ENCODE measurements at regions of chr10 and their contacts with region 1.

Region 1: GRCh38 chr10:77165445-77166208 is 472.0 kb downstream of the KCNMA1 start:
- DNase-seq: peak; percentile 100
- ATAC-seq: peak; percentile 16
- H3K4me3 ChIP-seq: peak overlapping the region; percentile 43
- H3K27ac ChIP-seq: no peak overlapping the region; the same call in 1 of the 2 replicates
- H3K4me1 ChIP-seq: peaks cover 32% of the 10 kb centered on the region
- H3K27me3 ChIP-seq: no peaks in the 10 kb centered on the region
- CTCF ChIP-seq: no peak

Region 2: DNA sequence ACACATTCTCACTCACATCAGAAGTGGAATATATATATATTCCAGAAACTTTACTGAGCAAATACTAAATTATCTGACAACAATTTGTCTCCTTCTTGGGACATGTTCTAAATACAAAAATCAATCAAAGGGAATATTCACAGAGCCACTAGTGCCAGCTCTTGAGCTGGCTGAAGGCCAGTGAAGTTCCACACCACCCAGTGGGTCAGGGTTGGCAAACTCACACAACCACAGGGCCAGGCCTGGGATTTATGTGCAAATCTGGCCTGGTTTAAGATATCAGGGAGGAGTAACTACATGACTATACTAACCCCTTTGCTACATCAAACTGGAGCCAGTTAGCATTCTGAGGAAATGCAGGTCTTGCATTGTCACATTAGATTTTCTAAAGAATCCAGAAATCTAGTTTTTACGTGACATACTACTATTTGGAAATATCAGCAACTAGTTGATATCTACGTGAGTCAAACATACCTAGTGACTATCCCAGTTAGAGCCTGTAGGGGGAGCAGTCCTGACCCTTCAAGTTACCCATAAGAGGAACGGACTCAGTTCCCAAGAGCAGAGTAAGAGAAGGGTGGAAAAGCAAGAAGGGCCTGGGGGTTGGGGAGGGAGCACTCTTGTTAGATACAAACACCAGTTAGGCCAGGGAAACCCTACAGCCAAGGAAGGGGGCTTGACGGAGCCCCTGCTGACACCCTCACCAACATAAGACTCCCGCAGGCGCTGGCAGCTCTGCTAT is 128.5 kb before region 1 on chr10:
- CTCF ChIA-PET with region 1: no interaction called
- POLR2A ChIA-PET with region 1: no interaction called
- intact Hi-C with region 1: loop called (anchors 1 kb)
- DNase-seq: peak; percentile 74
- ATAC-seq: 0 out of 2 replicates have a peak, but pooled peaks have one; percentile 8
- H3K4me3 ChIP-seq: no peak overlapping the region
- H3K27ac ChIP-seq: no peak overlapping the region
- H3K4me1 ChIP-seq: peaks cover 7% of the 10 kb centered on the region
- H3K27me3 ChIP-seq: no peaks in the 10 kb centered on the region
- CTCF ChIP-seq: peak; percentile 100

Region 3: DNA sequence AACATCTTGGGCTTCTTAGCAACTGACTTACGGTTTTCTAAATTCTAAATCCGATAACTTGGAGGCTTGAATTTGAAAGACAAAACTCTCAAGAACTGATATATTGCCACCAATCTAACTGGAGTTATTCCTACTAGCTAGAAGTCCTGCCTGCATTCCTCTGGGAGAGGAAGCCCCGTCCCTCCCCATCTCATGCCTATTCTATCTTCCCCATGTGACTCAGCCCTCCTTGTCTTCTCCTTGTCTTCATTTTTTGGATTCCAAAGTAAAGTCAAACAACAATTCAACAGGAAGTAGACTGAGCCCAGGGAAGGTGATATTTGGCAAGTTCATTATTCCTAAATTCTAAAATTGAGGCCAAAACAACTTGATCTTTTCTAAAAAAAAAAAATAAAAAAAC is 115.7 kb before region 1 on chr10:
- CTCF ChIA-PET with region 1: no interaction called
- POLR2A ChIA-PET with region 1: no interaction called
- intact Hi-C with region 1: no loop called
- DNase-seq: peak; percentile 50
- ATAC-seq: no peak; the same call in 1 of the 2 replicates
- H3K4me3 ChIP-seq: no peak overlapping the region
- H3K27ac ChIP-seq: no peak overlapping the region
- H3K4me1 ChIP-seq: no peaks in the 10 kb centered on the region
- H3K27me3 ChIP-seq: no peaks in the 10 kb centered on the region
- CTCF ChIP-seq: no peak

Region 4: DNA sequence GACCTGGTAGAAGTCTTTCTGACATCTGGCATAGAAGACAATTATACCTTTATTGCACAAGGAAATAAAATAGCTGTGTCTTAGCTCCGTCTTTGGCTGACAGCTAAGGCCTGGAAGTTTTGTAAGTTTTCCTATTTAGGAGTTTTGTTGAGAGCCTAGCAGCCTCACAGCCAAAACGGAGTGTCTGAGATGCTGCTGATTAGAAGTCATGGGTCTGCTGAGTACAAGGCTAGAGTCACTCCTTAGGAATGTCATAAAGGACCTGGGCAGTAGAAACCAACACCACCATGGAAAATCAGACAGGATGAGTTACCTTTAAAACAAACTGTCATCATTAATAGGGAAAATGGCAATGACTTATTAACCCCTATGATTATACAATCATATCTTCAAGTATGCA is 29.5 kb after region 1 on chr10:
- CTCF ChIA-PET with region 1: interaction called, 4 read pairs
- POLR2A ChIA-PET with region 1: interaction called, 5 read pairs
- intact Hi-C with region 1: loop called (anchors 1 kb)
- DNase-seq: peak; percentile 100
- ATAC-seq: peak; percentile 99
- H3K4me3 ChIP-seq: 0 out of 2 replicates have a peak overlapping the region, but pooled peaks have one; percentile 0
- H3K27ac ChIP-seq: peak overlapping the region; percentile 41
- H3K4me1 ChIP-seq: peaks cover 46% of the 10 kb centered on the region
- H3K27me3 ChIP-seq: no peaks in the 10 kb centered on the region
- CTCF ChIP-seq: no peak

Region 5: DNA sequence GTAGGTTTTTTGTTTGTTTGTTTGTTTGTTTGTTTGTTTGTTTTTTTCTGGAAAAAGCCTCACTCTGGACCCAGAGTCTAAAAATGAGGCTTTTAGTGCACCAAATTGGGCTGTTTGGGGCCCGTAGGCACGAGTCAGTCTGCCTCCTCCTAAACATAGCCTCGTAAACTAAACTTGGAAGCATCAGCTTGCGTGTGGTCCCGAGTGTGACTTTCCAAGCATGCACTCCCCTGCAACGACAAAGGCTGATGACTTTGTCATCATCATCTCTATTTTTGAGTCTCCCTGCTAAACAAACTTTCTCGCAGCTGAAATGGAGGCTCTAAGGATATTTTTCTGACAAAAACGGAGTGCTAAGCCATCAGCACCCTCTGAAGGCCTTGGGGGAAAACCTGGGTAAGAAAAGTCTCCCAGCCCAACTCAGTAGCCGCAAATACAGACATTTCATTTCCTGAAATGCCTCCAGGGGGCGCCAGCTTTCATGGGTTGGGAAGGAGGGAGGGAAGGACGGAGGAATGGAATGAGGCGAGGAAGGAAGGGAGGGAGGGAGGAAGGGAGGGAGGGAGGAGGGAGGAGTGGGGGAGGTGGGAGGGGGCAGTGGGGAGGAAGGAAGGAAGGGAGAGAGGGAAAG is 226.1 kb after region 1 on chr10:
- CTCF ChIA-PET with region 1: interaction called, 20 read pairs
- POLR2A ChIA-PET with region 1: interaction called, 5 read pairs
- intact Hi-C with region 1: loop called (anchors 1 kb)
- DNase-seq: peak; percentile 100
- ATAC-seq: peak; percentile 25
- H3K4me3 ChIP-seq: peak overlapping the region; percentile 10; the same call in 1 of the 2 replicates
- H3K27ac ChIP-seq: peak overlapping the region; percentile 84
- H3K4me1 ChIP-seq: peaks cover 89% of the 10 kb centered on the region
- H3K27me3 ChIP-seq: no peaks in the 10 kb centered on the region
- CTCF ChIP-seq: peak; percentile 97

Region 6: DNA sequence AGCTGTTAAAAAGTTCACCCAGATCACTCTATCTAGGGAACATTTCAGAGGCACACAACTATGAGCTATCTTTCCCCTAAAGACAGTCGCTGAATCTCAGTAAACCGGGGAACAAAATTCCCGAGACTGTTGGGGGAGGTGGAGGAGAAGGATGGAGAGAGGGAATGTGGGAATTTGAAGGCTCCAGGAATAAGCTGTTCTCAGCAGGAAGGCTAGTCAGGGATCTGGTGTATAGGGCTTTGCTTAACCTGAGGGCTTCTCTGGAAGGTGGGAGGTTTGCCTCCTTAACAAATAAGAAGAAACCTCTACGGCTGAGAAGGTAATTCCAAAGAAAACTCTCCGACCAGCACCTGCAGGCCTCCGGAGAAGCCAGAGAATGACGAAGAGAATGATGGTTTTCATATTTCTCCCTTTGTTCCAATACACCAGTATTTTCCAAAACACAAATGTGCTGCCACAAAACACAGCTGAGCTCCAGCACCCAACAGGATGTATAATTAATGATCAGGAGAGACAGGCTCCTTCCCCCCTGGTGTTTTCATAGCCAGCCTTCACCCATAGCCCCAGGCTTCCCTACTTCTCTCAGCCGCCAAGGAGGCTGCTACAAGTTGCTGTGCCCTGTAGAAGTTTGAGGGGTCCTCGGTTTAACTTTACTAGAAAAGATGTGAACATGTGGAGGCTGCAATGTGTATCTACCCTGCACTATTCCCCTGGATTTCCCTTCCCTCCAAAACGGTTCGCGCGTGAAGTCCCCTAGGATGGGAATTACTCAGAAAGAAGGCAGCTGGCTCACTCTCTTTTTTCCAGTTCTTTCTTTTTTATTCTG is 470.0 kb after region 1 on chr10:
- CTCF ChIA-PET with region 1: interaction called, 18 read pairs
- POLR2A ChIA-PET with region 1: no interaction called
- intact Hi-C with region 1: no loop called
- DNase-seq: peak; percentile 70
- ATAC-seq: peak; percentile 25
- H3K4me3 ChIP-seq: peak overlapping the region; percentile 75
- H3K27ac ChIP-seq: 0 out of 2 replicates have a peak overlapping the region, but pooled peaks have one; percentile 0
- H3K4me1 ChIP-seq: peaks cover 62% of the 10 kb centered on the region
- H3K27me3 ChIP-seq: no peaks in the 10 kb centered on the region
- CTCF ChIP-seq: no peak

Region 7: GRCh38 chr10:77846718-77847630 is 681.3 kb after region 1 on chr10:
- CTCF ChIA-PET with region 1: no interaction called
- POLR2A ChIA-PET with region 1: no interaction called
- intact Hi-C with region 1: loop called (anchors 5 kb)
- DNase-seq: peak; percentile 98
- ATAC-seq: peak; percentile 68
- H3K4me3 ChIP-seq: no peak overlapping the region
- H3K27ac ChIP-seq: peak overlapping the region; percentile 1
- H3K4me1 ChIP-seq: peaks cover 30% of the 10 kb centered on the region
- H3K27me3 ChIP-seq: no peaks in the 10 kb centered on the region
- CTCF ChIP-seq: peak; percentile 100

Measured in PC-3 (cell line).